Sigmoid colon (tissue), 7 donors: ENCODE measurements at regions of chr1 and their contacts with region 1.

Region 1: GRCh38 chr1:115642168-115643072 is 650 bp downstream of the VANGL1 start:
- DNase-seq: peak; percentile 75
- H3K4me3 ChIP-seq: peak overlapping the region; percentile 57 to 95 (median 72)
- H3K27ac ChIP-seq: peak overlapping the region; percentile 78 to 91 (median 86)
- H3K4me1 ChIP-seq: peaks cover 0 to 31% (median 24%) of the 10 kb centered on the region in 4 donors
- H3K27me3 ChIP-seq: no peaks in the 10 kb centered on the region
- CTCF ChIP-seq: no peak
- EP300 ChIP-seq: no peak
- POLR2A ChIP-seq: no peak

Region 2: GRCh38 chr1:115679141-115679611 is 36.8 kb after region 1 on chr1:
- intact Hi-C with region 1: loop called (anchors 5 kb)
- DNase-seq: peak; percentile 84
- H3K4me3 ChIP-seq: no peak overlapping the region
- H3K27ac ChIP-seq: peak overlapping the region; percentile 70 to 93 (median 82)
- H3K4me1 ChIP-seq: peaks cover 0 to 53% (median 47%) of the 10 kb centered on the region in 4 donors
- H3K27me3 ChIP-seq: no peaks in the 10 kb centered on the region
- CTCF ChIP-seq: peak in 2 of 4 experiments; percentile 10 to 20
- EP300 ChIP-seq: no peak
- POLR2A ChIP-seq: no peak

Region 3: DNA sequence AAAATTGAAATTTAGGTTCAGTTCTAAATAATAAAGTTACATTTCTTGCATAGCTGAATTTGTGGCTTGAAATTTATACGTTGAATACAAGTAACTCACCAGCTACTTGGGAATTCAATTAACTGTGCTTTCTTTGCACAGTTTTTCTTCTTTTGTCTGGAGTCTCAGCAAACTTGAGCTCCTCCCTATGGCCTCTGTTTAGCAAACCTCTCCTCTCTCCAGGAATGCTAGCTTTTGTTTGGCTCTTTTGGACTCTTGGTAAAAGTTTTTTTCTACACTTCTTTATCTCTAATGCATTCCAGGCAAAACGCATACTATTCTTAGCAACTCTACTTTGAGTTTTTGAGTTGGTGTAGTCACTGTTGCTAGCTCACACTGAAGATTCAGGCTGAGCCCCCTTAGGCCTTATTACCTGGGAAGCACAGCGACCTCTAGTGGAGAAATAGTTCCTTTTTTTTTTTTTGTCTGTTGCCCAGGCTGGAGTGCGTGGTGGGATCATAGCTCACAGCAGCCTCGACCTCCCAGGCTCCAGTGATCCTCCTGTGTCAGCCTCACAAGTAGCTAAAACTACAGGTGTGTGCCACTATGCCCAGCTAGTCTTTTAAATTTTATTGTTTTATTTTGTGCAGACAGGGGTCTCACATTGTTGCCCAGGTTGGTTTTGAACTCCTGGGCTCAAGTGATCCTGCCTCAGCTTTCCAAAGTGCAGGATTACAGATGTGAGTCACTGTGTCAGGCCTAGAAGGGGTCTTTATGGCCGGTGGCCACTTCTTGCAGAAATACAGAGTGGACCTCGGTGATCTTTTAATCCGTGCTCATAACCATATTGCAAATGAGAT is 64.4 kb after region 1 on chr1:
- intact Hi-C with region 1: loop called (anchors 5 kb)
- DNase-seq: no peak
- H3K4me3 ChIP-seq: no peak overlapping the region
- H3K27ac ChIP-seq: no peak overlapping the region
- H3K4me1 ChIP-seq: peaks cover 0 to 3% (median 0%) of the 10 kb centered on the region in 4 donors
- H3K27me3 ChIP-seq: no peaks in the 10 kb centered on the region
- CTCF ChIP-seq: peak in 2 of 4 experiments; percentile 41 to 67
- EP300 ChIP-seq: no peak
- POLR2A ChIP-seq: no peak

Region 4: GRCh38 chr1:115771847-115772457 is 129.5 kb after region 1 on chr1:
- intact Hi-C with region 1: loop called (anchors 5 kb)
- DNase-seq: peak; percentile 85
- H3K4me3 ChIP-seq: peak overlapping the region in 3 of 4 donors; percentile 8 to 35 (median 17)
- H3K27ac ChIP-seq: peak overlapping the region; percentile 53 to 86 (median 69)
- H3K4me1 ChIP-seq: peaks cover 0 to 22% (median 12%) of the 10 kb centered on the region in 4 donors
- H3K27me3 ChIP-seq: no peaks in the 10 kb centered on the region
- CTCF ChIP-seq: peak; percentile 66 to 84 (median 79)
- EP300 ChIP-seq: no peak
- POLR2A ChIP-seq: no peak